ENCODE measurements at regions of chr18 and their contacts with region 1.

Region 1: DNA sequence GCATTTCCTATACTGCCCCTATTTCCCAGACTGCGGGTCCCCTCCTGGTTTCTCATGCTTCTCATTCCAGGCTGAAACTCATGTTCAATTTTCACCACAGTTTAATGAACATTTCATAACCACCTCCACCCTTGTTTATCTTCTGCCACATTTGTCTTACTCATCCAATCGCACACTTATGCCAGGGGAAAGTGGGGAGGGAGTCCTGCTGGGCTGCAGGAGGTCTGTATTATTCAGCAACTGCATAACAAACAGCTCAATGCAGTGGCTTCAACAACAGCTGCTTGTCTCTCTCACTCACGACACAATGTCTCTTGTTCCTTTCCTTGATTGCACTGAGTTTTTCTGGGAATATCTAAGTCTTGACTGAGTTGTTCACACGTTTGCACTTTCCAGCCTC is 106.0 kb downstream of the ZNF519 start:
- DNase-seq: no peak
- ATAC-seq: no peak
- H3K4me3 ChIP-seq: no peak overlapping the region
- H3K27ac ChIP-seq: no peak overlapping the region
- H3K4me1 ChIP-seq: no peaks in the 10 kb centered on the region
- H3K27me3 ChIP-seq: peaks cover 0 to 6% (median 0%) of the 10 kb centered on the region in 7 donors
- CTCF ChIP-seq: no peak

Region 2: DNA sequence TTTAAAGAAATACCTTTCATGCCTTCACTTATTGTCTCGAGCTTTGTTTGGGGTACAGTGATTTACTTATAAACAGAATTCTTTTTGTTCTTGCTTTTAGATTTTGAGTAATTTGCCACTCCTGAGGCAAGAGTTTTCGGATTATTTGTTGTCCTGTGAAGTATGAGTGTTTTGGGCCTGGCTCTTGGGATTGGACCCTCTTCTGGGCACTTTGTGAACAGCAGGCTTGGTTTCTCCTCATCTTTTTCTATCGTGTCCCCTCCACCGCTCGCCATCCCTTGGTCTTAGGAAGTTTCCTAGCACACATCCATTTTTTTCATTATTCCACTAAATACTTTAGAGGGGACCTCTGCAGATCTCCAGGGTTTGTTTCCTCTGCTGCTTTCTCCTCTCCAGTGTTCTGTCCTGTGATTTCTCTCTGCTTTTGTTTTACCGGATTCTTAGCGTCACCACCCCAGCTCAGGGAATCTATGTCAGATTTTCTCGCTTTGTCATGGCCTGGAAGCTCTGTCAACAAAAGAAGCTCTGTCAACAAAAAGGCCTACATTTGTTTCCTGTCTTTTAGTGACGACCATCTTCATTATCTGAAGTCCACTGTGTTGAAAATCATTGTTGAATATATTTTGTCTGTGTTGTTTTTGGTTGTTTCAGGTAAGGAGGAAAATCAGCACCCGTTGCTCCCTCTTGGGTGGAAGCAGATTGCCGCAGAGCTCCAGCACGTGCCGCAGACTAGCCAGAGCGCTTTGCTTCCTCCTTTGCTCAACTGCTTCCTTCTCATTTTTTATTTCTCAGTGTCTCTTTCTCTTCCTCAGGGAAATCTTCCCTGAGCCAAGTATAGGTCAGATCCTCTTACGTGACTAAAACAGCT is 1904.8 kb before region 1 on chr18:
- intact Hi-C with region 1: no loop called
- DNase-seq: no peak
- ATAC-seq: no peak
- H3K4me3 ChIP-seq: no peak overlapping the region
- H3K27ac ChIP-seq: no peak overlapping the region
- H3K4me1 ChIP-seq: no peaks in the 10 kb centered on the region
- H3K27me3 ChIP-seq: peaks cover 0 to 9% (median 7%) of the 10 kb centered on the region in 7 donors
- CTCF ChIP-seq: peak in 5 of 9 donors; percentile 6 to 26 (median 17)

Region 3: GRCh38 chr18:13973056-13973575 is 53.1 kb before region 1 on chr18:
- intact Hi-C with region 1: loop called in 1 of 10 experiments (anchors 10 kb)
- DNase-seq: no peak
- ATAC-seq: no peak
- H3K4me3 ChIP-seq: no peak overlapping the region
- H3K27ac ChIP-seq: no peak overlapping the region
- H3K4me1 ChIP-seq: no peaks in the 10 kb centered on the region
- H3K27me3 ChIP-seq: no peaks in the 10 kb centered on the region
- CTCF ChIP-seq: no peak